Activated CD4-positive, alpha-beta T cell treated with anti-CD3 and anti-CD28 coated beads, Interleukin-2, amount 10 ng/mL, durations not matched to agents 24 days and 14 days (primary cell): ENCODE measurements at regions of chr18 and their contacts with region 1.

Region 1: DNA sequence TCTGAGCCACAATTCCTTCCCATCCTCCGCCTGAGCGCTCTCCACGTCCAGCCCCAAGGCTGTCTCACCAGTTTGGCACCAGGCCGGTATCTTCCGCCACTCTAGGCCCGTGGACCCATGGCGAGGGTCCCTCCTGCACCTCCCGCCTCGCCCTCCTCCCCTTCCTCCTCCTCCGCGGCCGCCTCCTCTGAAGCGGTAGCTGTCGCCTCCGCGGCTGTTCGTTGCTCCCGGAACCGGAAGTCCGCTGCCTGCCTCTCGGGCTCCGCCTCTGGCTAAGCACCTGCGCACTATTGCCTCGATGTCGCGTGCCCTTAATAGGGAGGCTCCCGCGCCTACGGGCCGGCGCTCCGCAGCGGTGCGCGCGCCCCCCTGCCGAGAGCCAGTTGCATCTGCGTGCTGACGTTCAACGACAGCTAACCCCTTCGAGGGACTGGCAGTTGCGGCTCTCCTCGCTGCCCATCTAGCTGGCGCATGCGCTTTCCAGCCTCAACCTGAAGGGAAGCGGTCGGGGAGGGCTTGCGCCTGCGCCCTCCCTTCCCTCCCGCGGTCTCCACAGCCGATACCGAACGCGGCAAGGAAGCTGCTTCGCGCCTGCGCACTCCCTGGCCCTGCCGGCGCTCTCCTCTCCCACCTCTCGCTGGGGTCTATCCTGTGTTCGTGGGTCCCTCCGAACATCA is at the start of gene MBD1:
- DNase-seq: peak; percentile 91
- H3K4me3 Mint-ChIP-seq: peak within 1 kb of the TSS; percentile 90
- H3K27ac Mint-ChIP-seq: peak within 1 kb of the TSS; percentile 98
- H3K4me1 Mint-ChIP-seq: peaks cover 49% of the 10 kb centered on the region
- H3K27me3 Mint-ChIP-seq: no peaks in the 10 kb centered on the region
- total RNA-seq, gene MBD1: 91.7 and 93.3 TPM in 2 replicates

Region 2: GRCh38 chr18:49486953-49487710 is 794.3 kb before region 1 on chr18 and contains the start of gene C18orf32:
- intact Hi-C with region 1: loop called (anchors 1 kb)
- DNase-seq: peak; percentile 98
- H3K4me3 Mint-ChIP-seq: peak within 1 kb of the TSS; percentile 89
- H3K27ac Mint-ChIP-seq: peak within 1 kb of the TSS; percentile 94
- H3K4me1 Mint-ChIP-seq: peaks cover 42% of the 10 kb centered on the region
- H3K27me3 Mint-ChIP-seq: no peaks in the 10 kb centered on the region
- total RNA-seq, gene C18orf32: 20.4 and 26.1 TPM in 2 replicates

Region 3: GRCh38 chr18:50111265-50111792 is 170.1 kb before region 1 on chr18:
- intact Hi-C with region 1: no loop called
- DNase-seq: no peak
- H3K4me3 Mint-ChIP-seq: no peak overlapping the region
- H3K27ac Mint-ChIP-seq: no peak overlapping the region
- H3K4me1 Mint-ChIP-seq: no peaks in the 10 kb centered on the region
- H3K27me3 Mint-ChIP-seq: peaks cover 14% of the 10 kb centered on the region

Region 4: GRCh38 chr18:50266248-50266704 is 15.2 kb before region 1 on chr18 and contains the start of gene CFAP53:
- intact Hi-C with region 1: loop called (anchors 1 kb)
- DNase-seq: peak; percentile 95
- H3K4me3 Mint-ChIP-seq: peak within 1 kb of the TSS; percentile 83
- H3K27ac Mint-ChIP-seq: peak within 1 kb of the TSS; percentile 78
- H3K4me1 Mint-ChIP-seq: peaks cover 20% of the 10 kb centered on the region
- H3K27me3 Mint-ChIP-seq: peaks cover 6% of the 10 kb centered on the region
- total RNA-seq, gene CFAP53: 0.38 and 0.63 TPM in 2 replicates

Region 5: DNA sequence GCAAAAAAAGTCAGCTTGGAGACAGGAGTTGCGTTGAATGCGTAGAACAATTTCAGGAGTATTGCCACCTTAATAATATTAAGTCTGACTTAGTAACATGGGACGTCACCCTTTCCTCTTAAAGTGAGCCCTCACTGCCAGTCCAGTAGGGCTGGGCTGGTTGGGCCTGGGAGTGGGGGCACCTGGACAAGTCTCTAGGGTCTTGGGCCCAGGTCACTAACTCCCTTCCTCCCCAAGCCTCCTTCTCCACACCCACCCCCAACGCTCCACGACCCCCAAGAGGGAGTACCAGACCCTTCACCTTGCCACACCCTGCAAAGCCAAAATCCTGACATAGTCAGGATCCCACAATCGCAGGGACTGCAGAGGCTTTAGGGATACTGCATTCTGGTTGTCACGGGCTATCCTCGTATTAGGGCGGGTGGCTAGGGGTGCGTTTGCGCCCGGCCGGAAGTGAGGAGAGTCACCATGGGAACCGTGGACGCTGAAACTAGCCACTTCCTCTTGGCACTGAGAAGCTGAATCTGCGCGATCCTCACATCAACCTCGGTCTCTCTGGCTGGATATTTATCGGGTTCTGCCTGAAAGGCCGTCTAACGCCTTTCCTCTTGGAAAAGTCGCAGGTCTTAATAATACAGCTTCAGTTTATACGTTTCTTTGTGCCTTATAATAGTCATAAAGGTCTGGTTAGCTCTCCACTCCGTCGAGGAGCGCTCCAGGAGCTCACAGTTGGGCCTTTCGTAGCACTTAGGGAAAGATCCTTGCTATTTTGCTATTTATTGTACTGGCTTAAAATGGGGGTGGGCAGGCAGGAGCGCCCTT is 16.4 kb after region 1 on chr18:
- intact Hi-C with region 1: loop called (anchors 1 kb)
- DNase-seq: peak; percentile 92
- H3K4me3 Mint-ChIP-seq: peak overlapping the region; percentile 80
- H3K27ac Mint-ChIP-seq: no peak overlapping the region
- H3K4me1 Mint-ChIP-seq: peaks cover 8% of the 10 kb centered on the region
- H3K27me3 Mint-ChIP-seq: peaks cover 42% of the 10 kb centered on the region

Region 6: GRCh38 chr18:50307738-50308470 is 26.5 kb after region 1 on chr18:
- intact Hi-C with region 1: loop called (anchors 1 kb)
- DNase-seq: peak; percentile 97
- H3K4me3 Mint-ChIP-seq: peak overlapping the region; percentile 95
- H3K27ac Mint-ChIP-seq: peak overlapping the region; percentile 86
- H3K4me1 Mint-ChIP-seq: peaks cover 13% of the 10 kb centered on the region
- H3K27me3 Mint-ChIP-seq: peaks cover 25% of the 10 kb centered on the region

Region 7: GRCh38 chr18:50374753-50375391 is 93.4 kb after region 1 on chr18 and contains the start of gene SKA1:
- intact Hi-C with region 1: loop called (anchors 1 kb)
- DNase-seq: peak; percentile 98
- H3K4me3 Mint-ChIP-seq: peak within 1 kb of the TSS; percentile 90
- H3K27ac Mint-ChIP-seq: peak within 1 kb of the TSS; percentile 89
- H3K4me1 Mint-ChIP-seq: peaks cover 15% of the 10 kb centered on the region
- H3K27me3 Mint-ChIP-seq: peaks cover 6% of the 10 kb centered on the region
- total RNA-seq, gene SKA1: 20.0 and 22.1 TPM in 2 replicates